CD4-positive, alpha-beta T cell (primary cell): ENCODE measurements at regions of chr12 and their contacts with region 1.

Region 1: GRCh38 chr12:64679487-64679983 is 69.2 kb downstream of the RASSF3 start:
- DNase-seq: peak; percentile 53 to 90 (median 68)
- ATAC-seq: peak; percentile 66
- H3K4me3 ChIP-seq: peak overlapping the region; percentile 19
- H3K4me3 Mint-ChIP-seq: peak overlapping the region; percentile 59
- H3K27ac ChIP-seq: peak overlapping the region; percentile 80 to 91
- H3K27ac Mint-ChIP-seq: peak overlapping the region; percentile 98
- H3K4me1 ChIP-seq: peaks cover 99% of the 10 kb centered on the region
- H3K4me1 Mint-ChIP-seq: peaks cover 90% of the 10 kb centered on the region
- H3K27me3 ChIP-seq: no peaks in the 10 kb centered on the region
- H3K27me3 Mint-ChIP-seq: no peaks in the 10 kb centered on the region
- CTCF ChIP-seq: no peak

Region 2: DNA sequence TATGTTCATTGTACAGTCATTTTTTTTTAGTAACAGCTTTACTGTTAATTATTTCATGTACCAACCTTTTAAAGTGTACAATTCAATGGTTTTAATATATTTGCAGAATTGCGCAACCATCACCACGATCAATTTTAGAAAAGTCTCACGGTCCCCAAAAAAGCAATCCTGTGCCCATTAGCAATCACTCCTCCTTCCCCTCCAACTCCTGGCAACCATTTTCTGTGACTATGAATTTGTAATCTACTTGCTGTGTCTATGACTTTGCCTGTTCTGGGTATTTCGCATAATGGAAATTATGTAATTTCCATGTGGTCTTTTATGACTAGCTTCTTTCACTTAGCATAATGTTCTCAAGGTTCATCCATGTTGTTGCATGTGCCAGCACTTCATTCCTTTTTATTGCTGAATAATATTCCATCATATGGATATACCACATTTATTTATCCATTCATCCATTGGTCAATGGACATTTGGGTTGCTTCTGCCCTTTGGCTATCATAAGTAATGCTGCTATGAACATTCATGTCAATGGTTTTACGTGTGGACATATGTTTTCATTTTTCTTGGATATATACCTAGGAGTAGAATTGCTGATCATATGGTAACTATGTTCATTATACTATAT is 467.3 kb before region 1 on chr12:
- CTCF ChIA-PET with region 1: no interaction called
- POLR2A ChIA-PET with region 1: no interaction called
- intact Hi-C with region 1: no loop called
- DNase-seq: no peak
- ATAC-seq: no peak
- H3K4me3 ChIP-seq: no peak overlapping the region
- H3K4me3 Mint-ChIP-seq: no peak overlapping the region
- H3K27ac ChIP-seq: no peak overlapping the region
- H3K27ac Mint-ChIP-seq: no peak overlapping the region
- H3K4me1 ChIP-seq: no peaks in the 10 kb centered on the region
- H3K4me1 Mint-ChIP-seq: no peaks in the 10 kb centered on the region
- H3K27me3 ChIP-seq: no peaks in the 10 kb centered on the region
- H3K27me3 Mint-ChIP-seq: no peaks in the 10 kb centered on the region
- CTCF ChIP-seq: no peak

Region 3: DNA sequence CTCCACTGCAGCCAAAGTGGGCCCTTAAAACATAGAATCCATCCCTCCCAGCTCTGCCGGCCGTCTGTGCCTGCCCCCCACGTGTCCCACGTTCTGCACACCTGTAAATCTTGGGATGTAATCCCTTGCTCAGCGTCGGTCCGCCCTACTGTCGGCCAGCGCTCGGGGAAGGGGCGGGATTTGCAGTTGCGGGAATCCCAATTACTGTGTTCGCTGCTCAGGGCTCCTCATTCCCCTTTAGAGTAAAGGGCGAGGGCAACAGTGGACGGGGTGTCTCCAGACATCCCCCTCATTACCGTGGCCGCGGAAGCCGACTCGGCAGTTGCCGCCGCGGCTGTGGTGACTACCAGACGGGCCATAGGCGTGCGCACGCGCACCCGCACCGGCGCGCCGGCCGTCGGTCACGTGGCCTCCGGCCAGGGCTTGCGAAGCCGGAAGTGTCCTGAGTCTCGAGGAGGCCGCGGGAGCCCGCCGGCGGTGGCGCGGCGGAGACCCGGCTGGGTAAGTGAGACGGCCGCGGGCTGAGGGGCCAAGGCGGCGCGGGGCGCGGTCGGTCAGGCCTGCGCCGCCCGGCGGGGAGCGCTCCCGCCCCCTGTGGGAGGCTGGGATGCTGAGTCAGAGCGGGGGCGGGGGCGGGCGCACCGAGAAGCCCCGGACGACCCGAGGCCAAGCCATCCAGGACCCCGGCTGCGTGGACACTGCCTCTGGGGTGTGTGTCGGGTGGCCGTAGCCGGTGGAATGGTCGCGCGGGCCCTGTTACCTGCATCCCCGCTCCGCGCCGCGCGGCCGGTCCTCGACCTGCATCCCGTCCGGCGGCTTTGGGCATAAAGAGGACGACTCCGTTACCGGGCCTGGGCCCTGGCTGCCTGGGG is 227.6 kb before region 1 on chr12 and contains the start of gene TBK1:
- CTCF ChIA-PET with region 1: no interaction called
- POLR2A ChIA-PET with region 1: no interaction called
- intact Hi-C with region 1: loop called in 1 of 2 experiments (anchors 10 kb)
- DNase-seq: peak in 13 of 14 experiments; percentile 20 to 80 (median 45)
- ATAC-seq: peak; percentile 64
- H3K4me3 ChIP-seq: peak within 1 kb of the TSS; percentile 99
- H3K4me3 Mint-ChIP-seq: peak within 1 kb of the TSS; percentile 94
- H3K27ac ChIP-seq: peak within 1 kb of the TSS; percentile 79 to 86
- H3K27ac Mint-ChIP-seq: peak within 1 kb of the TSS; percentile 92
- H3K4me1 ChIP-seq: peaks cover 28% of the 10 kb centered on the region
- H3K4me1 Mint-ChIP-seq: peaks cover 49% of the 10 kb centered on the region
- H3K27me3 ChIP-seq: no peaks in the 10 kb centered on the region
- H3K27me3 Mint-ChIP-seq: no peaks in the 10 kb centered on the region
- CTCF ChIP-seq: no peak
- total RNA-seq, gene TBK1: 5.6 to 7.2 TPM

Region 4: GRCh38 chr12:64714551-64714968 is 35.0 kb after region 1 on chr12:
- CTCF ChIA-PET with region 1: no interaction called
- POLR2A ChIA-PET with region 1: no interaction called
- intact Hi-C with region 1: no loop called
- DNase-seq: peak in 5 of 14 experiments; percentile 5 to 79 (median 51)
- ATAC-seq: peak; percentile 83
- H3K4me3 ChIP-seq: no peak overlapping the region
- H3K4me3 Mint-ChIP-seq: no peak overlapping the region
- H3K27ac ChIP-seq: no peak overlapping the region
- H3K27ac Mint-ChIP-seq: peak overlapping the region; percentile 35
- H3K4me1 ChIP-seq: peaks cover 3% of the 10 kb centered on the region
- H3K4me1 Mint-ChIP-seq: peaks cover 44% of the 10 kb centered on the region
- H3K27me3 ChIP-seq: no peaks in the 10 kb centered on the region
- H3K27me3 Mint-ChIP-seq: no peaks in the 10 kb centered on the region
- CTCF ChIP-seq: no peak